WTC11 (cell line): ENCODE measurements at regions of chr1 and their contacts with region 1.

Region 1: DNA sequence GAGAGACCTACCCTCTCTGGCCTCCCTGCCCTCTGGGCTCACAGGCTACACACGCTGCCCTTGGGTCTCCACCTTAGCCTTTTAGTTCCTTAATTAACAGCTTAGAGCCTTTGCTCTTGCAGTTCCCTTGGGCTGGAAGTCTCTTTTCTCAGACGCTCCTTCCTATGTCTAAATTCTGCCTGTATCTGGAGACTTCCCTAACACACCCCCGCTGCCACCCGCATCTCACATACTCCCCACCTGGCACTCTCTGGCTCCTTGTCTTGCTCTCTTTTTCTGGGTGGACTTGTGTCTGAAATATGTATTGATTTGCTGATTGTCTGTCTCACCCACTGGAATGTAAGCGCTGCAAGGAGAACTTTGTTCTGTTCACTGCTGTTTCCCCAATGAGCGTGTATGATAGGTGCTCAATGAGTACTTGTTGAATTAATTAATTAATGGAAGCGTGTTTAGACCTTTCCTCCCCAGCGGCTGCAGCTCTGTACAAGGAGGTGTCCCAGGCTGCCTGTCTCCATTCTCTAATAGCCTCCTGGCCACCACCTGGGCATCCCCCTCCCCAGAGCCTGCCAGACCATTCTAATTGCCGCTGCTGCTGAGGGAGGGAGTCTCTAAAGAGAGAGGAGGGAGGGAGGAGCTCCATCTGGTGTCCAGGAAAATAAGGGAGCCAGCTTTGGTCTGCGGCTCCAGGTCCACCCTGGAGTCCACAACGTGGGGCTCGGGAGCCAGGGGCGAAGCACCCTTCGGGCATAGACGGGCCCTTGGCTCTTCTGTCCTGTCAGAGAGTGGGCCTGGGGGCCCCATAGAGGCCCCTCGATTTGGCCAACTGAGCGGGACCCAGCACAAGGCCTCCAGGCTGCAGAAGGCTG is 95.4 kb downstream of the RNF220 start:
- DNase-seq: peak; percentile 62
- ATAC-seq: peak; percentile 72
- H3K4me3 Mint-ChIP-seq: no peak overlapping the region
- H3K27ac Mint-ChIP-seq: no peak overlapping the region
- H3K4me1 Mint-ChIP-seq: peaks cover 40% of the 10 kb centered on the region
- H3K27me3 Mint-ChIP-seq: peaks cover 3% of the 10 kb centered on the region
- CTCF ChIP-seq: 0 out of 2 replicates have a peak, but pooled peaks have one; percentile 12

Region 2: DNA sequence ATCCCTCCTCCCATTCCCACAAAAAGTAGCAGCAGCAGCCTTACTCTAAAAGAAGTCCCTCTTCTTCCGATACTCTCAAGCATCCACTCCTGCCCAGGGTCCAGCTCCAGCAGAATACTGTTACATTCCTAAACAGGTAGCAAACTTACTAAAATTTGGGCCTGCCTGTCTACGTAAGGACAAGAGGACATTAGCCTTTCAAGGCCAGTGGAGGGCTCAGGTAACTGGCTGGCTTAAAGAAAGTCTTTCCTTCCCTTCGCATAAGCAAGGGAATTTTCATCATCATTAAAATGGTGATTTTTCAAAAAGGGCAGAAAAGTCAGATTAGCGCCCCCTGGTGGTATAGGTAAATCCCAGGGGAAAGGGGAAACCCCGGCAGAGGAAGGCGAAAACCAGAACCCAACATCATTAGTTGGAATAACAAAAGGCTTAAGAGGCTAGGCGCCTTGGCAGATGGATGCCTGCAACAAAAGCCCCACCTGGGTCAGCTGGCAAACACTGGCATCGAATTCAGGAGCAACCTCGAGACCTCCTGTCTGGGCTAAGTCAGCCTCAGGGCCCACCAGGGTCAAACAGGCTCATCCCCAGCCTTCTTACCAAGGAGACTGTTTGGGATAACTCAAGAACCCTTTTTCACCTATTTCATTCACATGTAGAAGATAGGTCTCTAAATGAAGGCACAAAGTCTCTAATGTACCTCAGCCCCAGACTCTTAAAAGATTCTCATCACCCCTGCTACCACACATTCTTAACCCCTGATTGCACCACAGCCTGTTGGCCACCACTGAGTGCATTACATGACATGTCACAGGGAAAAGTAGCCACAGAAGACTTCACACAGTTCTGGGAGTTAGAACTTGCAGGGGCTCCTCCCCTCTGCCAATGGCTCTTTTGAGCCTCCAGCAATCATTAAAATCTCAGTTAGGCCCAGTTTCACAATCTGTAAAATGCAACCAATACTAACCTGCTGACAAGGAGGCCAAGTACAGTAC is 182.0 kb before region 1 on chr1:
- CTCF ChIA-PET with region 1: interaction called, 12 read pairs
- POLR2A ChIA-PET with region 1: no interaction called
- DNase-seq: peak; percentile 69
- ATAC-seq: peak; percentile 82
- H3K4me3 Mint-ChIP-seq: no peak overlapping the region
- H3K27ac Mint-ChIP-seq: peak overlapping the region; percentile 55; the same call in 1 of the 2 replicates
- H3K4me1 Mint-ChIP-seq: peaks cover 22% of the 10 kb centered on the region
- H3K27me3 Mint-ChIP-seq: no peaks in the 10 kb centered on the region
- CTCF ChIP-seq: peak; percentile 75

Region 3: GRCh38 chr1:44401256-44402228 is 98.9 kb before region 1 on chr1:
- CTCF ChIA-PET with region 1: no interaction called
- POLR2A ChIA-PET with region 1: no interaction called
- DNase-seq: no peak
- ATAC-seq: no peak
- H3K4me3 Mint-ChIP-seq: no peak overlapping the region
- H3K27ac Mint-ChIP-seq: no peak overlapping the region
- H3K4me1 Mint-ChIP-seq: no peaks in the 10 kb centered on the region
- H3K27me3 Mint-ChIP-seq: peaks cover 23% of the 10 kb centered on the region
- CTCF ChIP-seq: no peak

Region 4: GRCh38 chr1:44485229-44485933 is 15.0 kb before region 1 on chr1:
- CTCF ChIA-PET with region 1: interaction called, 23 read pairs
- POLR2A ChIA-PET with region 1: interaction called, 3 read pairs
- DNase-seq: no peak
- ATAC-seq: no peak
- H3K4me3 Mint-ChIP-seq: no peak overlapping the region
- H3K27ac Mint-ChIP-seq: peak overlapping the region; percentile 77
- H3K4me1 Mint-ChIP-seq: peaks cover 26% of the 10 kb centered on the region
- H3K27me3 Mint-ChIP-seq: no peaks in the 10 kb centered on the region
- CTCF ChIP-seq: no peak

Region 5: DNA sequence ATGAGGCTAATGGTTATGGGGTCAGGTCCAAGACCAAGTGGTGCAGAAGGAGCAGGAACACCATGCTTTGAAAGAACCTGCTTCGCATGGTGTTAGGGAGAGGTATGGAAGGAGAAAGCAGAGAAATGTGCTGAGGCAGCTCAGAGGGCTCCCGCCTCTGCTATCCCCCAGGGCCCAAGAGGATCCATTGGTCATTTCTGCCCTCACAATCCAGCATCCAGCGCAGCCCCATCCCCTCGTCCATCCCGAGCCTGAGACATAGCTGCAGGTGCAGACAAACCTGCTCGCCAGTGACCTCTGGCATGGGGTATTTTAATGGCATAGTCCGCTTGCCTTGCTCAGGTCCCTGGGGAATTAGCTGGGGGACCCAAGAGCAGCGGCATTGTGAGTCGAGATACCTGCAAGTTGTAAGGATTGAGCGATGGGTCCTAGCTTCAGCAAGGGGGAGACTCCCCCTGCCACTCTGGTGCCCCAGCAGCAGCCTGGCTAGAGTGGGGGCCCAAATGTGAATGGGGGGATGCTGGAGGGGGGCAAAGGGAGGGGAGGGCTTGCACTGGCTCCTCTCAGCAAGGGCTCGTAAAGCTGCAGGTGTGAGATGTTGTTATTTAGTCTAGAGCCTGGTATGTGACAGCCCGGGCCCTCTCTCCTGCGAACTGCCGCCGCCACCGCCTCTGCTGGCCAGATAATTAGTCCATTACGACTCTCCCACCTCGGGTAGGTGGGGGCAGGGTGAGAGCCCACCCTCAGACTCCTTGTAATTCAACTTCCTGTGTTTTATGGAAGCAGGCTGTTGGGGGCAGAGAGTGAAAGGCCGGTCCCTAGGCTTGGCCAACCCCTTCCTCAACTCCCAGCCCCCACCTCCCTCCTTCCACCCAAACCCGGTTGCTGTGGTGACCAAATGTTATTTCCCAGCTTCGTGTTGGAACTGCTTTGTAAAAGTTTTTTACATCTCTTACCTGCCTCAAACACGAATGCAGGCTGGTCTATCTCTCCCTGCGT is 23.5 kb after region 1 on chr1:
- CTCF ChIA-PET with region 1: interaction called, 17 read pairs
- POLR2A ChIA-PET with region 1: no interaction called
- DNase-seq: peak; percentile 76
- ATAC-seq: peak; percentile 95
- H3K4me3 Mint-ChIP-seq: no peak overlapping the region
- H3K27ac Mint-ChIP-seq: peak overlapping the region; percentile 86
- H3K4me1 Mint-ChIP-seq: peaks cover 26% of the 10 kb centered on the region
- H3K27me3 Mint-ChIP-seq: no peaks in the 10 kb centered on the region
- CTCF ChIP-seq: no peak

Region 6: GRCh38 chr1:44536357-44537209 is 36.2 kb after region 1 on chr1:
- CTCF ChIA-PET with region 1: interaction called, 43 read pairs
- POLR2A ChIA-PET with region 1: interaction called, 3 read pairs
- DNase-seq: no peak
- ATAC-seq: peak; percentile 23
- H3K4me3 Mint-ChIP-seq: peak overlapping the region; percentile 29; the same call in 1 of the 2 replicates
- H3K27ac Mint-ChIP-seq: peak overlapping the region; percentile 84
- H3K4me1 Mint-ChIP-seq: peaks cover 78% of the 10 kb centered on the region
- H3K27me3 Mint-ChIP-seq: peaks cover 7% of the 10 kb centered on the region
- CTCF ChIP-seq: no peak

Region 7: DNA sequence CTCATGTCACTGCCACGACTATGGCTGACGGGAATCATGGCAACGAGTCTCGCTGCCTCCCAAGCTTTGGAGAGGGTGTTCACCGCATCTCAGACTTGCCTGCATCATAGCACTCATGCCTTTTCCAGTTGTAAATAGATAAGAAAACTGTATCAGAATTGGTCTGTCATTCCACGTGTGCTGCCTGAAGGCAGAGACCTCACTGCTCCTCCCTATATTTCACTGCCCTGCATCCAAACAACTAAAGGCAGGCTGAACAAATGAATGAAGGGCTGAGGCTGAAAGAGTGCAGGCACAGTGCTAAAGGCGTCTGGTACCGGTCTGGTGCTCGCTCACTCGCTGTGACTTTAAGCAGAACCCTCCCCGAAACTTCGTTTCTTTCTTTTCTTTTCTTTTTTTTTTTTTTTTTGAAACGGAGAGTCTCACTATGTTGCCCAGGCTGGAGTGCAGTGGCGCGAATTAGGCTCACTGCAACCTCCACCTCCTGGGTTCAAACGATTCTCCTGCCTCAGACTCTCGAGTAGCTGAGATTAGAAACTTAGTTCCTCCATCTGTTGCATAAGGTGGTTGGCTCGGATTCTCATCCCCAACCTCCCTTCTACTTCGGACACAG is 485.4 kb after region 1 on chr1:
- CTCF ChIA-PET with region 1: no interaction called
- POLR2A ChIA-PET with region 1: no interaction called
- DNase-seq: no peak
- ATAC-seq: no peak
- H3K4me3 Mint-ChIP-seq: peak overlapping the region; percentile 100
- H3K27ac Mint-ChIP-seq: no peak overlapping the region
- H3K4me1 Mint-ChIP-seq: peaks cover 18% of the 10 kb centered on the region
- H3K27me3 Mint-ChIP-seq: peaks cover 11% of the 10 kb centered on the region
- CTCF ChIP-seq: no peak